Aorta (tissue), 5 donors: ENCODE measurements at regions of chr10 and their contacts with region 1.

Region 1: GRCh38 chr10:80444646-80445319 is 9.3 kb upstream of the TSPAN14 start:
- DNase-seq: peak; percentile 70 to 85
- ATAC-seq: peak; percentile 89
- H3K4me3 ChIP-seq: no peak overlapping the region
- H3K27ac ChIP-seq: no peak overlapping the region
- H3K4me1 ChIP-seq: no peaks in the 10 kb centered on the region
- H3K27me3 ChIP-seq: no peaks in the 10 kb centered on the region

Region 2: DNA sequence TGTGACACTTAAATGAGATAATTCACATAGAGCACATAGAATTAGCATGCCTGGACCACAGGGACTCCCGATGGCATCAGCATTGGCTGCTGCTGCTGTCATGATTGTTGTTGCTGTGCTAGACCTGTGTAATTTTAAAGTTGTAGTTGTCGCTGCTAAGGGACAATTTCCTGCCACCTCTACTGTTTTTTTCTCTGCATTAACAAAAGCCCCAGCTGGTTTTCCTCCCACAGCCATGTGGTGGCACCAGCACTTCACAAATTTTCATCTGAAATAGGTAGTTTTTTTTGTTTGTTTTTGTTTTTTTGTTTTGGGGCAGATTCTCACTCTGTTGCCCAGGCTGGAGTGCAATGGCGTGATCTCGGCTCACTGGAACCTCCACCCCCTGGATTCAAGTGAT is 61.8 kb before region 1 on chr10:
- intact Hi-C with region 1: loop called in 1 of 2 experiments (anchors 2 kb)
- DNase-seq: no peak
- ATAC-seq: no peak
- H3K4me3 ChIP-seq: no peak overlapping the region
- H3K27ac ChIP-seq: no peak overlapping the region
- H3K4me1 ChIP-seq: no peaks in the 10 kb centered on the region
- H3K27me3 ChIP-seq: no peaks in the 10 kb centered on the region

Region 3: GRCh38 chr10:80506189-80506575 is 61.4 kb after region 1 on chr10:
- intact Hi-C with region 1: loop called (anchors 1 kb)
- DNase-seq: no peak
- ATAC-seq: no peak
- H3K4me3 ChIP-seq: no peak overlapping the region
- H3K27ac ChIP-seq: no peak overlapping the region
- H3K4me1 ChIP-seq: no peaks in the 10 kb centered on the region
- H3K27me3 ChIP-seq: no peaks in the 10 kb centered on the region

Region 4: GRCh38 chr10:80662577-80663261 is 217.9 kb after region 1 on chr10:
- intact Hi-C with region 1: loop called in 1 of 2 experiments (anchors 10 kb)
- DNase-seq: peak; percentile 88 to 94
- ATAC-seq: peak; percentile 92
- H3K4me3 ChIP-seq: peak overlapping the region in 1 of 2 donors; percentile 33
- H3K27ac ChIP-seq: peak overlapping the region in 1 of 2 donors; percentile 82
- H3K4me1 ChIP-seq: no peaks in the 10 kb centered on the region
- H3K27me3 ChIP-seq: no peaks in the 10 kb centered on the region